Vagina (tissue), 2 donors: ENCODE measurements at regions of chr17 and their contacts with region 1.

Region 1: DNA sequence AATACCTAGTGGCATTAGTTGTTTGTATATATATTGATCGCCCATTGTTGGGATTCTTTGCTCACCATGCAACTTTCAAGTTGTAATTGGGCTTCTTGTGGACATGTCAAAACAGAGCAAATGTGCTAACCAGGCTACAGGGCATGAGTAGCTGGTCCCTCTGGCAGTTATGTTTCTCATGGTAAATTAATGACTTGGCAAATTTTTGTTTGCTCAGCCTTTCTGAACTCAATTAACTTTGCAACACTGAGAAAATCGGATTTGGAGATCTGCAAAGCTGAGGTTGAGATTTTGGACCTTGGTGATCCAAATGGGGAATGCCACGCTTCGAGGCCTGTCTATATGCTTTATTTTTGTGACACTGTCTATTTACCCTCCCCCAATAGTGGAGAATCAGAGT is 138.5 kb upstream of the PIRT start:
- DNase-seq: no peak
- H3K4me3 ChIP-seq: no peak overlapping the region
- H3K27ac ChIP-seq: no peak overlapping the region
- H3K4me1 ChIP-seq: no peaks in the 10 kb centered on the region
- H3K27me3 ChIP-seq: no peaks in the 10 kb centered on the region
- CTCF ChIP-seq: no peak
- POLR2A ChIP-seq: no peak

Region 2: GRCh38 chr17:10697092-10698081 is 279.0 kb before region 1 on chr17 and contains the starts of genes ADPRM and SCO1:
- intact Hi-C with region 1: no loop called
- DNase-seq: peak in 1 of 2 donors; percentile 93
- H3K4me3 ChIP-seq: peak within 1 kb of the TSS; percentile 69 to 86
- H3K27ac ChIP-seq: peak within 1 kb of the TSS; percentile 96
- H3K4me1 ChIP-seq: peaks cover 26% of the 10 kb centered on the region
- H3K27me3 ChIP-seq: no peaks in the 10 kb centered on the region
- CTCF ChIP-seq: peak in 2 of 3 experiments; percentile 25 to 63
- POLR2A ChIP-seq: peak in 1 of 2 donors; percentile 82
- total RNA-seq, gene ADPRM: 18.7 TPM
- total RNA-seq, gene SCO1: 38.8 TPM

Region 3: DNA sequence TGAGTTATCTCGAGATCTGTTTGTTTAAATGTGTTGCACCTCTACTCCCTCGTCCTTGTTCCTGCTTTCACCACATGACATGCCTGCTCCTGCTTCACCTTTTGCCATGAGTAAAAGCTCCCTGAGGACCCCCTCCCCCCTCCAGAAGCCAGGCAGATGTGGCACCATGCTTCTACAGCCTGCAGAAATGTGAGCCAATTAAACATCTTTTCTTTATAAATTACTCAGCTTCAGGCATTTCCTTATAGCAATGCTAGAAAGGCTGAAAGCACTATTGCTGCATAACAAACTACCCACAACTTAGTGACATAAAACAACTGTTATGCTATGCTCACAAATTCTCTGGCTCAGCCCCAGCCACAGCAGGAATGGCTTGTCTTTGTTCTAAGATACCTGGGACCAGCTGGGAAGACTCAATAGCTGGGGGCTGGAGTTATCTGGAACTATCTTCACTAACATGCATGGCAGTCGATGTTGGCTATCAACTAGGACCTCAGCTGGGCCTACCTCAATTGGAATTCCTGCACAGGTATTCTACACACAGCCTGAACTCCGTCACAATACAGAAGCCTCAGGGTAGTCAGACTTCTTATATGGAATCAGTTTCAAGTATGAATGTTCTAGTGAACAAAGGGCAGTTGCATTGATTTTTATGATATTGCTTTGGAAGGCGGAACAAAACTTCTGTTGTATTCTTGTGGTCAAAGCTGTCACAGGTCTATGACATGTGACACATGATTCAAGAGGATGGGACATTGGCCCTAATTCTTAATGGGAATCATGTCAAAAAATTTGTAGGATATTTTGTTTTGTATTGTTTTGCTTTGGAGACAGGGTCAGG is 47.5 kb after region 1 on chr17:
- intact Hi-C with region 1: loop called (anchors 10 kb)
- DNase-seq: no peak
- H3K4me3 ChIP-seq: no peak overlapping the region
- H3K27ac ChIP-seq: no peak overlapping the region
- H3K4me1 ChIP-seq: no peaks in the 10 kb centered on the region
- H3K27me3 ChIP-seq: no peaks in the 10 kb centered on the region
- CTCF ChIP-seq: no peak
- POLR2A ChIP-seq: no peak

Region 4: DNA sequence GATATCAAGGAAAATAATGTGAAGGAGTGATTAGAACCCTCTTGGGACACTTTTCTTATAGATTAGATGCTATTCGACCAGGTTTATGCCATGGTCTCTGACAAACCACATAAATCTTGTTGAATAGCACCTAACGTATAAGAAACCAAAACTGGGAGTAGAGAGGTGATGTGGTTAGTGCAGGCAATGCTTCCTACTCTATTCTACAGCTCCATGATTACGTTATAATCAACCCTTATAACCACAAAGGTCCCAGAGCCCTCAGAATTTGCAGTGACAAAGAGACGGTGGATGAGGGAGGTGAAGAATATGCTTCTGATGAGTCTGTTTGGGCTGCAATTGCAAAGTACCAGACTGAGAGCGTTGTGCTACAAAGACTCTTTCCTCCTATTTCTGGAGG is 1891.3 kb after region 1 on chr17:
- intact Hi-C with region 1: no loop called
- DNase-seq: no peak
- H3K4me3 ChIP-seq: no peak overlapping the region
- H3K27ac ChIP-seq: no peak overlapping the region
- H3K4me1 ChIP-seq: no peaks in the 10 kb centered on the region
- H3K27me3 ChIP-seq: no peaks in the 10 kb centered on the region
- CTCF ChIP-seq: no peak
- POLR2A ChIP-seq: no peak